Naive thymus-derived CD4-positive, alpha-beta T cell (primary cell): ENCODE measurements at regions of chr1 and their contacts with region 1.

Region 1: GRCh38 chr1:85048296-85049064 is at the start of gene MCOLN3:
- DNase-seq: peak in 7 of 9 donors; percentile 9 to 56 (median 24)
- ATAC-seq: peak; percentile 67
- H3K4me3 ChIP-seq: peak within 1 kb of the TSS; percentile 38
- H3K4me3 Mint-ChIP-seq: peak within 1 kb of the TSS; percentile 70 to 86 (median 80)
- H3K27ac ChIP-seq: no peak within 1 kb of the TSS
- H3K27ac Mint-ChIP-seq: peak within 1 kb of the TSS in 1 of 9 donors; percentile 55
- H3K4me1 ChIP-seq: peaks cover 10 to 21% of the 10 kb centered on the region in 2 donors
- H3K4me1 Mint-ChIP-seq: peaks cover 7 to 35% (median 29%) of the 10 kb centered on the region in 7 donors
- H3K27me3 ChIP-seq: peaks cover 11 to 13% of the 10 kb centered on the region in 2 donors
- H3K27me3 Mint-ChIP-seq: peaks cover 47 to 60% (median 54%) of the 10 kb centered on the region in 5 donors
- total RNA-seq, gene MCOLN3: 0.77 to 11.1 (median 0.95) TPM

Region 2: DNA sequence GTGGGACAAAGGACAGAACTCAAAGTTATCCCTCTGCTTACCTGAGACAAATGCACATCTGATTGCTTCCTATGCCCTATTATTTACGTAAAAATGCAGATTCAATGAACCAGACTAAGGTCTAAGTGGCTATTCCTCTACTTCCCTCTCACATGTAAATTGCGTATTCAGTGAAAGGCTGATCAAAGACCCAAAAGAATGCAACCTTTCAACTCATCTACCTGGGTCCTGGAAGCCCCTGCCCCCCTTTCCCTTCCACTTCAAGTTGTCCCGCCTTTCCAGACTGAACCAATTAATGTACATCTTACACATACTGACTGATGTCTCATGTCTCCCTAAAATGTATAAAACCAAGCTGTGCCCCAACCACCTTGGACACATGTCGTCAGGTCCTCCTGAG is 372.8 kb before region 1 on chr1:
- CTCF ChIA-PET with region 1: no interaction called
- POLR2A ChIA-PET with region 1: no interaction called
- intact Hi-C with region 1: no loop called
- DNase-seq: no peak
- ATAC-seq: no peak
- H3K4me3 ChIP-seq: no peak overlapping the region
- H3K4me3 Mint-ChIP-seq: no peak overlapping the region
- H3K27ac ChIP-seq: no peak overlapping the region
- H3K27ac Mint-ChIP-seq: no peak overlapping the region
- H3K4me1 ChIP-seq: peaks cover 0 to 6% of the 10 kb centered on the region in 2 donors
- H3K4me1 Mint-ChIP-seq: peaks cover 8 to 38% (median 30%) of the 10 kb centered on the region in 7 donors
- H3K27me3 ChIP-seq: no peaks in the 10 kb centered on the region
- H3K27me3 Mint-ChIP-seq: no peaks in the 10 kb centered on the region

Region 3: GRCh38 chr1:84862810-84863251 is 185.6 kb before region 1 on chr1:
- CTCF ChIA-PET with region 1: no interaction called
- POLR2A ChIA-PET with region 1: no interaction called
- intact Hi-C with region 1: loop called in 1 of 2 experiments (anchors 5 kb)
- DNase-seq: peak in 8 of 9 donors; percentile 42 to 81 (median 66)
- ATAC-seq: peak; percentile 87
- H3K4me3 ChIP-seq: peak overlapping the region; percentile 44
- H3K4me3 Mint-ChIP-seq: peak overlapping the region; percentile 71 to 89 (median 83)
- H3K27ac ChIP-seq: peak overlapping the region; percentile 67
- H3K27ac Mint-ChIP-seq: peak overlapping the region; percentile 83 to 95 (median 92)
- H3K4me1 ChIP-seq: peaks cover 30 to 46% of the 10 kb centered on the region in 2 donors
- H3K4me1 Mint-ChIP-seq: peaks cover 31 to 69% (median 59%) of the 10 kb centered on the region in 7 donors
- H3K27me3 ChIP-seq: no peaks in the 10 kb centered on the region
- H3K27me3 Mint-ChIP-seq: peaks cover 0 to 6% (median 0%) of the 10 kb centered on the region in 5 donors

Region 4: DNA sequence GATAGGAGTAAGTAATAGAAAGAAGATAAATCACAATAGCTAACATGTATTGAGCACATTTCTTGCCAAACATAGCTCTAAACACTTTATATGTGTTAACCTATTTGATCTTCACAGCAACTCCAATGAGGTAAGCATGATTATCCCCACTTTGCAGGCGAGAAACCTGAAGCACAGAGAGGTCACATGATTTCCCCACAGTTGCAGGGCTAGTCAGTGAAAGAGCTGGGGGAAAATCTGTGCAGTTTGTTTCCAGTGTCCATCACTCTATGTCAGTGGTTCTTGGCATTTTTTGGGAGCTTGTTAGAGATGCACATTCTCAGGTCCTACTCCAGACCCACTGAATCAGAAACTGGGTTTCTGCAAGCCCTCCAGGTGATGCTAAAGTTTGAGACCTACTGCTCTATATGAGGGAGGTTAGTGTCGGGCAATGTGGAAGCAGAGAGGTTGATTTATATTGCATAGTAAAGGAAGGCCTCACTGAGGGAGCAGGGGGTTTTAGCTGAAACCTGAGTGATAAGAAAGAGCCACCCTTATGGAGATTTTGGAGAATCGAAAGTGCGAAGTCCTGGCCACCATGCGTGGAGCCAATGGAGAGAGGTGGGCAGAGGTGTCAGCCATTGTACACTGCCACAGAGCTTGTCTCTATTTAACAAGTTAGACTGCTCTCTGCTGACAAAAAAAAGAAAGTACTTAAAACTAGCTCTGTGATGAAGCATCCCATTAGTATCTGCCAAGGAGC is 21.1 kb before region 1 on chr1:
- CTCF ChIA-PET with region 1: interaction called, 4 read pairs
- POLR2A ChIA-PET with region 1: no interaction called
- intact Hi-C with region 1: loop called in 1 of 2 experiments (anchors 2 kb)
- DNase-seq: peak in 7 of 9 donors; percentile 12 to 56 (median 34)
- ATAC-seq: peak; percentile 94
- H3K4me3 ChIP-seq: peak overlapping the region; percentile 33
- H3K4me3 Mint-ChIP-seq: peak overlapping the region in 9 of 10 donors; percentile 19 to 70 (median 49)
- H3K27ac ChIP-seq: peak overlapping the region; percentile 5
- H3K27ac Mint-ChIP-seq: peak overlapping the region; percentile 43 to 91 (median 84)
- H3K4me1 ChIP-seq: peaks cover 0 to 7% of the 10 kb centered on the region in 2 donors
- H3K4me1 Mint-ChIP-seq: peaks cover 7 to 13% (median 10%) of the 10 kb centered on the region in 7 donors
- H3K27me3 ChIP-seq: no peaks in the 10 kb centered on the region
- H3K27me3 Mint-ChIP-seq: no peaks in the 10 kb centered on the region

Region 5: GRCh38 chr1:85078903-85079302 is 30.4 kb after region 1 on chr1:
- CTCF ChIA-PET with region 1: no interaction called
- POLR2A ChIA-PET with region 1: no interaction called
- intact Hi-C with region 1: loop called in 1 of 2 experiments (anchors 5 kb)
- DNase-seq: no peak
- ATAC-seq: no peak
- H3K4me3 ChIP-seq: no peak overlapping the region
- H3K4me3 Mint-ChIP-seq: no peak overlapping the region
- H3K27ac ChIP-seq: no peak overlapping the region
- H3K27ac Mint-ChIP-seq: no peak overlapping the region
- H3K4me1 ChIP-seq: no peaks in the 10 kb centered on the region
- H3K4me1 Mint-ChIP-seq: peaks cover 0 to 6% (median 4%) of the 10 kb centered on the region in 7 donors
- H3K27me3 ChIP-seq: no peaks in the 10 kb centered on the region
- H3K27me3 Mint-ChIP-seq: peaks cover 5 to 49% (median 15%) of the 10 kb centered on the region in 5 donors